Activated B cell treated with CpG ODN at 0.5 μM for 24 hours (primary cell): ENCODE measurements at regions of chr16 and their contacts with region 1.

Region 1: GRCh38 chr16:81798311-81799137 is 19.4 kb downstream of the PLCG2 start:
- DNase-seq: peak; percentile 74
- ATAC-seq: peak; percentile 80
- H3K4me3 Mint-ChIP-seq: peak overlapping the region; percentile 67
- H3K27ac Mint-ChIP-seq: peak overlapping the region; percentile 89
- H3K4me1 Mint-ChIP-seq: peaks cover 87% of the 10 kb centered on the region
- H3K27me3 Mint-ChIP-seq: no peaks in the 10 kb centered on the region
- CTCF ChIP-seq: no peak

Region 2: DNA sequence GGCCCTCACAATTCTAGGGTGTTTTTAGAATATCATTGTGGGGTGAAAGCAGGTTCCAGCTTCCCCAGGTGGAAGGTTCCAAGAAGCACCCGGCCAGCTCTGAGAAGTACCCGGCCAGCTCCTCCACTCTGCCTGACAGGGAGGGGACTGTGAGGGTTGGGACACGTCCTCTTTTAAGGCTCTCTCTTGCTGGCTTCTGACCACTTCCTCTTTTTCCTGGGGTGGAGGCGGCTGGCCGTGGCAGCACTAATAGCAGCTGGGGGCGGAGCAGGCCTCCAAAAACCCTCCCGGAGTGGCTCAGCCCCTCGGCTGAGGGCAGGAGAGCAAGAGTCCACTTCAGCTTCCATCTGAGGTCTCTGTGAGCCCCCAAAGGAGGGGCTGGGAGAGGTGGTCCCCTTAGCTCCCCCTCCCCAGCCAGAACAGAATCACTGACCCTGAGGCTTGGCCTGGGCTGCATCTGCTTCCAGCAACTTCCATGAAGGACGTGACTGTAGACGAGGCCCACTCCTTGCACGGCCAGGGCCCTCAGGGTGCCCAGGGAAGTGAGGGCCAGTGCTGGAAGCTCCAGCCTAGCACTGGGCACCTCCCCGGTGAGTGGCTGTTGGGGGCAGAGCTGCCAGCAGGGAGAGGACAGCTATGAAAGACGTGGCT is 46.2 kb before region 1 on chr16:
- CTCF ChIA-PET with region 1: interaction called, 3 read pairs
- POLR2A ChIA-PET with region 1: interaction called, 16 read pairs
- intact Hi-C with region 1: no loop called
- DNase-seq: peak; percentile 70
- ATAC-seq: peak; percentile 92
- H3K4me3 Mint-ChIP-seq: peak overlapping the region; percentile 46
- H3K27ac Mint-ChIP-seq: peak overlapping the region; percentile 82
- H3K4me1 Mint-ChIP-seq: peaks cover 82% of the 10 kb centered on the region
- H3K27me3 Mint-ChIP-seq: no peaks in the 10 kb centered on the region
- CTCF ChIP-seq: no peak

Region 3: DNA sequence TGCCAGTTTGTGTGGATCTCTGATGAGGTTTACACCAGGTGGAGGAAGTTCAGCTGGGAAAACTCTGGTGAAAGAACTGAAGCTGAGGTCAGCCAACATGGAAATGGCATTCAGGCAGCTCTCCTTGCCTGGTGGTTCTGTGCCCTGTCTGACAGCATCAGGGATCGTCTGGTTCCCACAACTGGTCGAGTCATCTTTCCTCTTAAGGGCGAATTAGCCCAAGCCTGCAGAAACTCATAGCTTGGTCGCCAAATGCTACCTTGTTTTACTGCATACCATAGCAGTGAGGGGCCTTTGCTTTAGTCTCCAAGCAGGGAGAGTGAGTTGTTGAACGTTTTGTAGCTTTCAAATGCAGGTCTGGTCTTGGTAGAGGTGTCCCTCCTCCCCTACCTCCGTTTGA is 12.2 kb before region 1 on chr16:
- CTCF ChIA-PET with region 1: interaction called, 4 read pairs
- POLR2A ChIA-PET with region 1: interaction called, 34 read pairs
- intact Hi-C with region 1: loop called (anchors 1 kb)
- DNase-seq: no peak
- ATAC-seq: no peak
- H3K4me3 Mint-ChIP-seq: peak overlapping the region; percentile 67
- H3K27ac Mint-ChIP-seq: peak overlapping the region; percentile 86
- H3K4me1 Mint-ChIP-seq: peaks cover 90% of the 10 kb centered on the region
- H3K27me3 Mint-ChIP-seq: no peaks in the 10 kb centered on the region
- CTCF ChIP-seq: no peak

Region 4: DNA sequence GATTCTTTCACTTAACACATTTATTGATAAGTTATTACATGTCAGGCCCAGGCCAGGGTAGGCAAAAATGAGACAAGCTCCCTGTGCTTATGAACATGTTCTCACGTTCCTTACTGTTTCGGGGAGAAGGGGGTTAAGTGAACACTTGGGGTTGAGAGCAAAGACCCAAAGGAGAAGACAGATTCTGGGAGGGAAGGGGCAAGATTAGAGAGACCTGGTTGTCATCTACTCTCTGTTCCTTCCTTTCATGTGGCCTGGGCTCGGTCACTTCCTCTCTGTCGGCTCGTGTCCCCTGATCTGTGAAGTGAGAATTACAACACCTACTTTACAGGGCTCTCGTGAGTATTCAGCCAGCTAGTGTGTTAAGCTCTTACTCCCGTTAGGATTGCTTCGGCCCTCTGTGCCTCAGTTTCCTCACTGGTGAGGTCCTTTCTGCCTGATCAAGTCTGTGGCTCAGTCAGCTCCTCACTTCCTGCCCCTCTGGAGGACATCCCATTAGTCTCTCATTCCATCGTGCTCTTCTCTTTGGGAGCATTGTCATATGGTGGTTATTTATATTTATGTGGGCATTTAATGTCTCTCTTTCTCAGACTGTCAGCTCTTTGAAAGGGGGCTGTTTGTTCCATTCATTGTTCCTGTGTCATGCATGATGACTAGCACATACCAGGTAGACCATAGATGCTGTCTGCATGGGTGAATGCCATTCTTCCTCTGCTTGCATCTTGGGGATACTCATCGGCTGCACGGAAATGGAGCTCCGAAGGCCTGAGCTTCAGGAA is 19.5 kb after region 1 on chr16:
- CTCF ChIA-PET with region 1: interaction called, 13 read pairs
- POLR2A ChIA-PET with region 1: interaction called, 194 read pairs
- intact Hi-C with region 1: loop called (anchors 1 kb)
- DNase-seq: no peak
- ATAC-seq: peak; percentile 65
- H3K4me3 Mint-ChIP-seq: peak overlapping the region; percentile 66
- H3K27ac Mint-ChIP-seq: peak overlapping the region; percentile 96
- H3K4me1 Mint-ChIP-seq: peaks cover 98% of the 10 kb centered on the region
- H3K27me3 Mint-ChIP-seq: no peaks in the 10 kb centered on the region
- CTCF ChIP-seq: no peak

Region 5: GRCh38 chr16:81831722-81832126 is 33.2 kb after region 1 on chr16:
- CTCF ChIA-PET with region 1: interaction called, 4 read pairs
- POLR2A ChIA-PET with region 1: interaction called, 160 read pairs
- intact Hi-C with region 1: loop called (anchors 1 kb)
- DNase-seq: peak; percentile 69
- ATAC-seq: peak; percentile 69
- H3K4me3 Mint-ChIP-seq: peak overlapping the region; percentile 77
- H3K27ac Mint-ChIP-seq: peak overlapping the region; percentile 97
- H3K4me1 Mint-ChIP-seq: peaks cover 96% of the 10 kb centered on the region
- H3K27me3 Mint-ChIP-seq: no peaks in the 10 kb centered on the region
- CTCF ChIP-seq: no peak

Region 6: GRCh38 chr16:81863630-81864352 is 65.3 kb after region 1 on chr16:
- CTCF ChIA-PET with region 1: no interaction called
- POLR2A ChIA-PET with region 1: interaction called, 5 read pairs
- intact Hi-C with region 1: loop called (anchors 1 kb)
- DNase-seq: no peak
- ATAC-seq: peak; percentile 73
- H3K4me3 Mint-ChIP-seq: peak overlapping the region; percentile 71
- H3K27ac Mint-ChIP-seq: peak overlapping the region; percentile 88
- H3K4me1 Mint-ChIP-seq: peaks cover 74% of the 10 kb centered on the region
- H3K27me3 Mint-ChIP-seq: no peaks in the 10 kb centered on the region
- CTCF ChIP-seq: no peak

Region 7: DNA sequence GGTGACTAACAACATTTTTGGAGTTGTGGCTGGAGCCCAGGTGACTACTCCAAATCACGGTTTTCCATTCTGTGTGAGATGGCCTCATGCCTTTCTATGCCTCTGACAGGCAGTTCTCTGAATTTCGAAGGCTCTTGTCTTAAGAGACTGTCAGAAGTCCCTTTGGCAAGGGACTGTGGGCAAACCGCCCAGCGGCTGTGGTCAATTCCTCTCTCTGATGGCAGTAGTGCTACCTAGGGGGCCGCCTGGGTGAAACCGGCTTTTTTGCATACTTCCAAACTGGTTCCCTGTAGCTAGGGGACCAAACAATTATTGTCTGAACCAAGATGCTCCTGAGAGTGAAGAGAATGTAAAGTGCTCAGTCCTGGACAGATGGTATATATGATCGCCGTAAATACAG is 126.5 kb after region 1 on chr16:
- CTCF ChIA-PET with region 1: no interaction called
- POLR2A ChIA-PET with region 1: no interaction called
- intact Hi-C with region 1: no loop called
- DNase-seq: no peak
- ATAC-seq: no peak
- H3K4me3 Mint-ChIP-seq: no peak overlapping the region
- H3K27ac Mint-ChIP-seq: no peak overlapping the region
- H3K4me1 Mint-ChIP-seq: no peaks in the 10 kb centered on the region
- H3K27me3 Mint-ChIP-seq: no peaks in the 10 kb centered on the region
- CTCF ChIP-seq: no peak

Region 8: GRCh38 chr16:82271636-82272035 is 473.1 kb after region 1 on chr16:
- CTCF ChIA-PET with region 1: no interaction called
- POLR2A ChIA-PET with region 1: no interaction called
- intact Hi-C with region 1: no loop called
- DNase-seq: no peak
- ATAC-seq: no peak
- H3K4me3 Mint-ChIP-seq: no peak overlapping the region
- H3K27ac Mint-ChIP-seq: no peak overlapping the region
- H3K4me1 Mint-ChIP-seq: no peaks in the 10 kb centered on the region
- H3K27me3 Mint-ChIP-seq: peaks cover 12% of the 10 kb centered on the region
- CTCF ChIP-seq: no peak